Naive thymus-derived CD4-positive, alpha-beta T cell (primary cell): ENCODE measurements at regions of chr19 and their contacts with region 1.

Region 1: DNA sequence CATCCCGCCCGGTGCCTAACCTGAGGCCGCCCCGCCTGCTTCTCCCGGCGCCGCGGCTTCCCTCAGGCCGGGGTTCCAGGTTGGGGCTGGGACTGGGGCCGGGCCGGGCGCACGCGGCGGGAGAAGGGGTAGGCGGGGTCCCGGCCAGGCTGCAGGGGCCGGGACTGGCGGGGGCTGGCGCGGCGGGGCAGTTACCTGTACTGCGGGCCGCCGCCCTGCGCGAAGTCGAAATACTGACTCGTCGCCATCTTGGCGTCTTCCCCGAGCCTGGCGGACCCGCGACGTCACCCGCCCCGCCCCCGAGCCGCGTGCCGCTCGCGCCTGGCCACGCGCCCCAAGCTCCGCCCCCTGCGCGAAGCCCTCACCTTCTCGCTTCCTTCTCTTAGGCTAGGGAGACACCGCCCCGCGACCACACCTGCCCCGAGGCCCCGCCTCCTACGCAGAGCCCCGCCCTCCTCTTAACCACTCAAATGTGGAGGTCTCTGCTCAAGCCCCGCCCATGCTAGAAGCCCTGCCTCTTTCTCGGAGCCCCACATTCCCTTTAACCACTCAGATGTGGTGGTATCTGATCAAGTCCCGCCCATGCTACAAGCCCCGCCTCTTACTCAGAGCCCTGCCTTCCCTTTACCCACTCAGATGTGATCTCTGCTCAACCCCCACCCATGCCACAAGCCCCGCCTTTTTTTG is at the start of gene ZFR2:
- DNase-seq: peak in 6 of 9 donors; percentile 18 to 30 (median 26)
- ATAC-seq: no peak
- H3K4me3 ChIP-seq: no peak within 1 kb of the TSS
- H3K4me3 Mint-ChIP-seq: peak within 1 kb of the TSS; percentile 9 to 84 (median 57)
- H3K27ac ChIP-seq: no peak within 1 kb of the TSS
- H3K27ac Mint-ChIP-seq: peak within 1 kb of the TSS in 2 of 9 donors; percentile 37 to 41
- H3K4me1 ChIP-seq: peaks cover 0 to 6% of the 10 kb centered on the region in 2 donors
- H3K4me1 Mint-ChIP-seq: peaks cover 3 to 17% (median 14%) of the 10 kb centered on the region in 7 donors
- H3K27me3 ChIP-seq: peaks cover 0 to 7% of the 10 kb centered on the region in 2 donors
- H3K27me3 Mint-ChIP-seq: peaks cover 32 to 59% (median 39%) of the 10 kb centered on the region in 5 donors
- total RNA-seq, gene ZFR2: 0.22 to 3.8 (median 1.4) TPM

Region 2: DNA sequence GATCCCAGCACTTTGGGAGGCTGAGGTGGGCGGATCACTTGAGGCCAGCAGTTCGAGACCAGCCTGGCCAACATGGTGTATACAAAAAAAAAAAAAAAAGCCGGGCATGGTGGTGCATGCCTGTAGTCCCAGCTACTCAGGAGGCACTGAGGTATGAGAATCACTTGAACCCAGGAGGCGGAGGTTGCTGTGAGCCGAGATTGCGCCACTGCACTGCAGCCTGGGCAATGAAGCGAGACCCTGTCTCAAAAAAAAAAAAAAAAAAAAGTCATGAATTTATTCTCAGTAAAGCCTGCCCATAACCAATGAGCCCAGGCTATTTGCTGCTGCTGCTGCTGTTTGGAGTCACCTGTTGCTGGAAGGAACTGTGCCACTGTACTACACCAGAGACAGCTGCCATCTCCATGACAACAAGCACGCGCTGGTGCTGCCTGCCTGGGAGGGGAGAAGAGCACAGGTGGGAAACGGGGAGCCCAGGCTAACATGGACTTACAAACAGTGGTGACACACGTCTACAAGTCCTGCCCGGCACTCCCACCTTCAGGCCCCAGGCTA is 11.4 kb before region 1 on chr19:
- CTCF ChIA-PET with region 1: no interaction called
- POLR2A ChIA-PET with region 1: no interaction called
- intact Hi-C with region 1: loop called in 1 of 2 experiments (anchors 1 kb)
- DNase-seq: no peak
- ATAC-seq: no peak
- H3K4me3 ChIP-seq: no peak overlapping the region
- H3K4me3 Mint-ChIP-seq: no peak overlapping the region
- H3K27ac ChIP-seq: no peak overlapping the region
- H3K27ac Mint-ChIP-seq: no peak overlapping the region
- H3K4me1 ChIP-seq: no peaks in the 10 kb centered on the region
- H3K4me1 Mint-ChIP-seq: no peaks in the 10 kb centered on the region
- H3K27me3 ChIP-seq: no peaks in the 10 kb centered on the region
- H3K27me3 Mint-ChIP-seq: no peaks in the 10 kb centered on the region

Region 3: DNA sequence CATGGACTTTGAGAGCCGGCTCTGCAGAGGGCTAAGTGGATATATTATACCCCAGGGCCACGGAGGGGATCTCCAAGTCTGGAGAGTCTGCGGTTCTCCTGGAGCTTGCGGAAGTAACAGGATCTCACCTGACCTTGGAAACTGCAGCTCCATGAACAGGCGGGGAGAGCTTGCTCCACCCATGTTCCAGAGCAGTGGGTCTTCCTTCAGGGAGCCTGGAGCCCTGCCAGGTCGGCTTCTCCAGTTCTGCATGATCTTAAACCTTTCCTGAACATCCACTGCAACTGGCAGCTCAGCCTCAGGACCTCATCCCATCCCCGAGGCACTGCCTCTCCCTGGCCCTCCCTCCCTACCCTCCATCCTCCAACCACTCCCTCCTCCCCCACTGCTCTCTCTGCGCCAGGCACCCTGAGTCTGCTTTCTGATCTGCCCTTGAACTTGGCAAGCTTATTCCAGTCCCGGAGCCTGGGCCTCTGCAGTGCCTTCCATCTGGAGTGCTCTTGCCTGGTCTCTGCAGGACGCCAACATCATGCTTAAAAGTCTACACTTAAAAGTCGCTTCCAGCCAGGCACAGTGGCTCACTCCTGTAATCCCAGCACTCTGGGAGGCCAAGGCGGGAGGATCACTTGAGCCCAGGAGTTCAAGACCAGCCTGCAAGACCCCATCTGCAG is 24.7 kb after region 1 on chr19:
- CTCF ChIA-PET with region 1: no interaction called
- POLR2A ChIA-PET with region 1: no interaction called
- intact Hi-C with region 1: no loop called
- DNase-seq: no peak
- ATAC-seq: no peak
- H3K4me3 ChIP-seq: no peak overlapping the region
- H3K4me3 Mint-ChIP-seq: no peak overlapping the region
- H3K27ac ChIP-seq: no peak overlapping the region
- H3K27ac Mint-ChIP-seq: no peak overlapping the region
- H3K4me1 ChIP-seq: no peaks in the 10 kb centered on the region
- H3K4me1 Mint-ChIP-seq: peaks cover 0 to 5% (median 4%) of the 10 kb centered on the region in 7 donors
- H3K27me3 ChIP-seq: no peaks in the 10 kb centered on the region
- H3K27me3 Mint-ChIP-seq: peaks cover 0 to 3% (median 0%) of the 10 kb centered on the region in 5 donors